ENCODE measurements at regions of chr2 and their contacts with region 1.

Region 1: GRCh38 chr2:230987137-230988020 is 8.5 kb upstream of the SPATA3 start:
- DNase-seq: peak; percentile 96
- H3K4me3 ChIP-seq: peak overlapping the region; percentile 50 to 63
- H3K27ac ChIP-seq: no peak overlapping the region
- H3K4me1 ChIP-seq: peaks cover 0 to 5% of the 10 kb centered on the region in 2 experiments; a peak in 1 of 4 replicates
- H3K27me3 ChIP-seq: peaks cover 6% of the 10 kb centered on the region; the same call in 1 of the 2 replicates
- CTCF ChIP-seq: peak; percentile 84
- EP300 ChIP-seq: no peak
- RAD21 ChIP-seq: peak; percentile 92

Region 2: DNA sequence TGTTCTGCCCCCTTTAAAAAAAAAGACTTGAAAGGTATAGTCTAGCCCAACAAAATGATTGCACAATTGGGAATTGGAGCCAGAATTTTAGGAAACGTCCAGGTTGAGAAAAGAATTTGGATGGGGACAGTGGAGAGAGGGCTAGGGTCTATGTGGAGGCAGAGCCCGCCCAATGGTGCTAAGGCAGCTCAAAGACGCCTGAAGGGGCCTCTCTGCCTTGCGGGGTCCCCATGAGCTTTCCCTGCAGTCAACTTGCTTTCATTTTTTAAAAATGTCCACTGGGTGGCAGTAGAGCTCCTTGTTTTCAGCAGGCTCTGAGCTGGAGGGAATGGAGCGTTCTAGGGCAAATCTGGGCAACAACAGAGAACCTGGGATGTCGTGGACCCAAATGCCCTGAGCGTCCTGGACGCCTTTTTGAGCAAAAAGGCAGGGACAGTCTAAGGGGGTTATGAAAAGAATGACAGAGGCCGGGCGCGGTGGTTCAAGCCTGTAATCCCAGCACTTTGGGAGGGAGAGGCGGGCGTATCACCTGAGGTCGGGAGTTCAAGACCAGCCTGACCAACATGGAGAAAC is 162.9 kb before region 1 on chr2:
- CTCF ChIA-PET with region 1: interaction called, 171 read pairs
- POLR2A ChIA-PET with region 1: no interaction called
- DNase-seq: peak; percentile 83
- H3K4me3 ChIP-seq: peak overlapping the region in 1 of 2 experiments; percentile 33; a peak in 2 of 4 replicates
- H3K27ac ChIP-seq: no peak overlapping the region
- H3K4me1 ChIP-seq: no peaks in the 10 kb centered on the region; a peak in 1 of 4 replicates
- H3K27me3 ChIP-seq: no peaks in the 10 kb centered on the region
- CTCF ChIP-seq: peak; percentile 72
- EP300 ChIP-seq: no peak
- RAD21 ChIP-seq: peak; percentile 94

Region 3: DNA sequence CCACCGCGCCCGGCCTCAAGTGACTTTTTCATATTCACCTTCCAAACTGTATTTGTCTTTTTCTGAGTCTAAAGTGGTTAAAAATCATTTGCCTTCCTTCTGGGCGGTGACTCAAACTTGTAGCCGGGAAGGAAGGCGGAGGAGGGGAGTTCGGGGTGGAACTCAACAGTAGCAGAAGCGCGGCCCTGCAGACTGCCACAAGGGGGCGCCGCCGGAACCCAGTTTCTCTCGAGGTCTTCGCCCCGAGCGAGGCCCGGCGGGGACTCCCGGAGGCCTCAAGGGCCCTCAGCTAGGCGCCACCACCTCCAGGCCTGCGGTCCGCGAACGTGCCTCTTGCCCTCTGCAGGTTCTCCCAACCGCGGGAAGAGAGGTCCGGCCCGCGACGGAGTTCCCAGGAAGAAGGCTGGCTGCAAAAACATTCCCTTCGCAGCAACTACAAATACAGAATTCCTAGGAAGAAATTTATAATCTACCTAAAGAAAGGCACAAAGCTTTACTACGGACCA is 139.4 kb before region 1 on chr2:
- CTCF ChIA-PET with region 1: interaction called, 106 read pairs
- POLR2A ChIA-PET with region 1: no interaction called
- DNase-seq: peak; percentile 89
- H3K4me3 ChIP-seq: peak overlapping the region in 1 of 2 experiments; percentile 32; a peak in 1 of 4 replicates
- H3K27ac ChIP-seq: no peak overlapping the region
- H3K4me1 ChIP-seq: no peaks in the 10 kb centered on the region; a peak in 1 of 4 replicates
- H3K27me3 ChIP-seq: peaks cover 2% of the 10 kb centered on the region; the same call in 1 of the 2 replicates
- CTCF ChIP-seq: peak; percentile 84
- EP300 ChIP-seq: 0 out of 4 replicates have a peak, but pooled peaks of 1 of the 2 experiments have one; percentile 13
- RAD21 ChIP-seq: peak; percentile 76

Region 4: GRCh38 chr2:230902180-230902899 is 85.0 kb before region 1 on chr2:
- CTCF ChIA-PET with region 1: interaction called, 17 read pairs
- POLR2A ChIA-PET with region 1: no interaction called
- DNase-seq: peak; percentile 49
- H3K4me3 ChIP-seq: no peak overlapping the region
- H3K27ac ChIP-seq: no peak overlapping the region
- H3K4me1 ChIP-seq: no peaks in the 10 kb centered on the region; a peak in 1 of 4 replicates
- H3K27me3 ChIP-seq: peaks cover 19% of the 10 kb centered on the region; the same call in 1 of the 2 replicates
- CTCF ChIP-seq: peak; percentile 67
- EP300 ChIP-seq: no peak
- RAD21 ChIP-seq: peak; percentile 63

Region 5: DNA sequence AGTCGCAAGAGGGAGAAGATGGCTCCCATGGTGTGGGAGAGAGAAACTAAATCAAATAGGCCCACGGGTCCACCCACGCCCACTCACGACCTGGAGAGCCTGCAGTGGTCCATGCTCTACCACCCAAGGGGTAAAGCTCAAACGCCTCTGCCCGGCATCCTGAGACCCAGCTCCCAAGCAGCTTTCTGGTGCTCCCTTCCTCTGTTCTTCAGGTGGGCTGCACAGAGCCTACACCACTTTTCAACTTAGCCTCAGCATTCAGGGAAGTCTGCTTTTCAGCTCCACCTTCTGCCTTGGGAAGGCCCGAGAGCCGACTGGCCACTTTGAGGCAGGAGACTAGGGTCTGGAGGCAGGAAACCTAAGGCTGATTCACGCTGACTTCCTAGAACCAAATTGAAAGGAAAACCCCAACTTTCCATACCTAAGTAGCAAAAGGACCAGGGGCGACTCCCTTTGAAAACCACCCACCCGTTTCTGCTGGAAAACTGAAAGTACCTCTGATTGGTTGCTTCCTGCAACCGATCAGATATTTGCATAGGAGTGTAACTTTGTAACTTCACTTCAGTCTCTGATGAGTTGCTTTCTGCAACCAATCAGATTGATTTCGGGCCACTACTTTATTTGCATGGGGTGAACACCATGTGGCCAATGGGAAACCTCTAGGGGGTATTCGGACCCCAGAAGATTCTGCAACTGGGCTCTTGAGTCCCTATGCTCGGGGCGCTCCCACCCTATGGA is 18.3 kb before region 1 on chr2:
- CTCF ChIA-PET with region 1: interaction called, 11 read pairs
- POLR2A ChIA-PET with region 1: no interaction called
- DNase-seq: no peak
- H3K4me3 ChIP-seq: no peak overlapping the region
- H3K27ac ChIP-seq: no peak overlapping the region
- H3K4me1 ChIP-seq: no peaks in the 10 kb centered on the region
- H3K27me3 ChIP-seq: no peaks in the 10 kb centered on the region
- CTCF ChIP-seq: no peak
- EP300 ChIP-seq: no peak
- RAD21 ChIP-seq: no peak

Region 6: DNA sequence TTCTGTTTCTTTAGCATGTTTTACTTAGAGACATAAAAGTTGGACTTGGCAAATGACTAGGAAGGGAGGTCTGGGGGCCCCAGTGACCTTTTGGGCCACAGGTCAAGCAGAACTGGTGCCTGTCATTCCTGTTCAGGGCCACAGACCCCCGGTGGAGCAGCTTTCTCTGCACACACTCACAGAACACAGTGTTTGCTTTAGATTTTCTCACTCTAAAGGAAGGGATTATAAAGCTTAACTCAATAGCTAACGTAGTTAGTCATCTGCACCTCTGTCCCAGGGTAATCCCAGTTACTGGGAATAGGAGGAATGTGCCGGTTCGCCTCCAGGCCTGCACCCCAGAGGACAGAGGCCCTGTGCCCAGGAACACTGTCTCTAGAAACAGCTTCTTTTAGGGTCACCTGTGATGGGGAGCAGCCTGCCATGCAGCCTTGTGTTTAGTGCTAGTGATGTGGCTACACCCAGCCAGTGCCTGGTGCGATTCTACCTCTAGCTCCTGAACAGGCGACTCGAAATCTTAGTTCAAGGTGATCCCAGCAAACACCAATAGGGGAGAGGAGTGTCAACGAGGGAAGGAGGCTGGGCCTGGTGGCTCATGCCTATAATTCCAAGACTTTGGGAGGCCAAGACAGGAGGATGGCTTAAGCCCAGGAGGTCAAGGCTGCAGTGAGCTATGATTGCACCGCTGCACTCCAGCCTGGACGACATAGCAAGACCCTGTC is 20.1 kb after region 1 on chr2:
- CTCF ChIA-PET with region 1: interaction called, 27 read pairs
- POLR2A ChIA-PET with region 1: no interaction called
- DNase-seq: no peak
- H3K4me3 ChIP-seq: no peak overlapping the region
- H3K27ac ChIP-seq: no peak overlapping the region
- H3K4me1 ChIP-seq: no peaks in the 10 kb centered on the region
- H3K27me3 ChIP-seq: peaks cover 14% of the 10 kb centered on the region; the same call in 1 of the 2 replicates
- CTCF ChIP-seq: no peak
- EP300 ChIP-seq: no peak
- RAD21 ChIP-seq: no peak